Prostate gland (tissue), 2 donors: ENCODE measurements at regions of chr12 and their contacts with region 1.

Region 1: DNA sequence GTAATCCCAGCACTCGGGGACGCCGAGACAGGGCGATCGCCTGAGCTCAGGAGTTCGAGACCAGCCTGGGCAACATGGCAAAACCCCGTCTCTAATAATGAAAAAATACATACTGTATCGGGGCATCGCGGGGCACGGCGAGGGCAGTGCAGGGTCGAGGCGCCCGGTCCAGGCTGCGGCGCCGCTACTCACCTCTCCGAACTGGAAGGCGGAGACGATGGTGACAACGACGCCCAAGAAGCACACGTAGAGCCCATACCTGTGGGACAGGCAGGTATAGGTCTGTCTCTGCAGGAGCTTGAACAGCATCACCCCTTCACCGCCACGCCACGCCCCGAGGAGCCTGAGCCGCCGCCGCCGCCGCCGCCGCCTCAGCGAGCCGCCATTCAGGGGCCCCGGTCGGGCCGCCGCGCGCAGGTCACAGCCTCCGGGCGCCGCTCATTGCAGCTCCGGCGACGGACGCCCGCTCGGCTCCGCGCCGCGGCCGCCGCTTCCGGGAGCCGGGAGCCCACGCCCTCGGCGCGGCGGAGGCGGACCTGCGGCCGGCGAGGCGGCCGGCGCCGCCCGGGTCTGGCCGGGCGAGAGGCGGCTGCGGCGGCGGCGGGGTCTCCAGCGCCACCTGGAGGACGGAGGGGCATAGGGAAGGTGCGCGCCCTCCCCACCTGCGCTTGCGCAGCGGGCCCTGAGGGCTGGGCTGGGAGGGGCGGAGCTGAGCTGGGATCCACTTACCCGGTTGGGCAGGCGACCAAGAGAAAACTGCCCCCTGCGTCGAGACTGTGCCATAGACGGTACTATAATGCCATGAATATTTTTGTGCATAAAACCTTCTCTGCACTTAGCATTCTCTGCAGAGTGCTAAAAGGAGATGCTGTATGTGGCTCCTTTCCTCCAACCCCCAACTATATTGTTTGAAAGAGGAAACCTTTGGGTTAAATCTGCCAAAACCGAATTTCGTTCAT is at the start of gene GNPTAB:
- DNase-seq: peak; percentile 87
- H3K4me3 ChIP-seq: peak within 1 kb of the TSS; percentile 66 to 68
- H3K27ac ChIP-seq: peak within 1 kb of the TSS; percentile 68 to 74
- H3K4me1 ChIP-seq: no peaks in the 10 kb centered on the region
- H3K27me3 ChIP-seq: no peaks in the 10 kb centered on the region
- CTCF ChIP-seq: peak; percentile 72 to 95 (median 84)
- POLR2A ChIP-seq: no peak
- total RNA-seq, gene GNPTAB: 49.9 to 52.7 TPM

Region 2: GRCh38 chr12:101564912-101565311 is 265.7 kb before region 1 on chr12:
- intact Hi-C with region 1: loop called (anchors 10 kb)
- DNase-seq: no peak
- H3K4me3 ChIP-seq: no peak overlapping the region
- H3K27ac ChIP-seq: no peak overlapping the region
- H3K4me1 ChIP-seq: no peaks in the 10 kb centered on the region
- H3K27me3 ChIP-seq: no peaks in the 10 kb centered on the region
- CTCF ChIP-seq: no peak
- POLR2A ChIP-seq: no peak

Region 3: GRCh38 chr12:101773650-101774162 is 56.9 kb before region 1 on chr12:
- intact Hi-C with region 1: loop called (anchors 2 kb)
- DNase-seq: peak; percentile 52
- H3K4me3 ChIP-seq: no peak overlapping the region
- H3K27ac ChIP-seq: no peak overlapping the region
- H3K4me1 ChIP-seq: peaks cover 14% of the 10 kb centered on the region
- H3K27me3 ChIP-seq: no peaks in the 10 kb centered on the region
- CTCF ChIP-seq: peak; percentile 94 to 98 (median 96)
- POLR2A ChIP-seq: no peak